ENCODE measurements at regions of chr4 and their contacts with region 1.

Region 1: DNA sequence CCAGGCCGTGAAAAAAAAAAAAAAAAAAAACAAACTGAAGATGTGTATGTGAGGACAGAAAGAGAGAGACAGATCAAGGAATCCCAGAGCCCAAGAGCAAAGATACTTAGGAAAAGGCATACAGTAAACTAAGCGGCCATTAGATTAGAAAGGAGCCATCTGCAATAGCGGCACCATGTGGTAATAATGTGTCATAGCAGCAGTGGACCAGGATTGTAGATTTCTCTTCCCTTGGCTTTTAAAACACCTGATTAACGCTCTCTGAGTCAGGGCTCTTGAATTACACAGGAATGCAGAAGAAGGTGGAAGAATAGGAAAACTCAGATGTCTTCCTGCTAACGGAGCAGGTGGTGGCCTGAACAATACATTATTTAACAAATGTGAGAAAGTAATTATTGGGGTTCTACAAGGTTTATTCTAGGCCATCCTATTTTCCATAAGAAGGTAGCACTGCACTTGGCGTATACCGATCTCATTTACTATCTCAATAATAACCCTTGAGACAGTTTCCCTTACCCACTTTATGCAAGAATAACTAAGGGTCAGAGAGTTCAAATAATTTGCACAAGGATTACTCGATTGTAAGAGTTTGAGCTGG is 182.7 kb downstream of the KCNIP4 start:
- DNase-seq: no peak
- ATAC-seq: no peak

Region 2: DNA sequence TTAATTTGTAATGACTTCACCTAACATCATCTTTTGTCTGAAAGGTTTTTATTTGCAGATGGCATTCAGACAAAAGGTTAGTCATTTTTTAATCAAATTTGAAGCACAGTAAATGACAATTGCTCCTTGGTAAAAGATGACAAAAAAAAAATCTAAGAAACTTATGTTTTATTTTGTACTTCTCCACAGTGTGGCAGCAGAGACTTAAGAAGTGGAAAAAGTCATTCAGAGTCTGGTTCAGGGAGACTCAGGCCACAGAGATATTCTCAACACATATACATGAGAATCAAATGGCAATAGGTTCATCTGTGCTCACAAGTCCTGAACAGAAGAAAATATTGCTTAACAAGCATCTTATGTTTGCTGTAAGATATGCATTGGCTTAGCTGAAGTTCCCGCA is 253.6 kb before region 1 on chr4:
- intact Hi-C with region 1: loop called (anchors 5 kb)
- DNase-seq: no peak
- ATAC-seq: no peak

Region 3: DNA sequence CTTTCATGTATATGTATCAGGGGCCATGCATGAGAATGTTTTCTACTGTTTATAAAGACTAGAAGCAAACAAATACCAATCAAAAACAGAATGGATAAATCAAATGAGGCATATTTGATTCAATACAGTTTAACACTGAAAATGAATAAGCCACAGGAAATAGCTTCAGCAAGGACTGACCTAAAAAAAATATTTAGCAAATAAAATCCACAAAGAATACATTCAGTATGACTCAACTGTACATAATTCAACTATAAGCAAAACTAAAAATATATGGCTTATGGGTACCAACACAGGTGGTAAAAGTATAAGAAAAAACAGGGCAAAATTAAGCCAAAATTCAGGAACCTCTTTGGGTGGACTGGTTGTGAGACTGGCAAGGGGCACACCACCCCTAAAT is 69.8 kb after region 1 on chr4:
- intact Hi-C with region 1: no loop called
- DNase-seq: no peak
- ATAC-seq: no peak

Region 4: DNA sequence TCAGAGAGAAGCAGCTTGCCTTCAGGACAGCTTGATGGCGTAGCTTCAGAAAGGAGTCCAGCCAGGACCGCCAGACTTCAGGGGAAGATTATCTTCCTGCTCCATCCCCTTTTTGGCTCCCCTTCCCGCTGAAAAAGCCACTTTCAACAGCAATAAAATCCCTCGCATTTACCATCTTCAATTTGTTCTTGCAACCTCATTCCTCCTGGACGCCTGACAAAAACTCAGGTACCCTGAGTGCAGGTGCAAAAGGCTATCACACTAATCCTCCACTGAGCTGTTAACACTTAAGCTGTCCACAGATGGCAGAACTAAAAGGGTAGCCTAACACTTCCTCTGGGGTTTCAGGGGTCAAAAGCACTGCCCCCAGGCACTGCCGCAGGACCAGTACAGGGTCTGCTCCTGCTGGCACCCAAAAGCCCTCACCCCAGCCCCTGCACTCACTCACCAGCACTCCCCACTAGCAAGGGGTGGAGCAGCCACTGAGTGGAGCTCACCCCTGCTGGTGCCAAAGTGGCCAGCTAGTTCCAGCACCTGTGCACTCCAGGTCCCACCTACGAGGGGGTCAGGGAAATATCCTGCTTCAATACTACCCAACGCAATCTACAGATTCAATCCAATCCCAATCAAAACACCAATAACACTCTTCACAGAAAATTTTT is 604.1 kb after region 1 on chr4:
- intact Hi-C with region 1: no loop called
- DNase-seq: no peak
- ATAC-seq: no peak